ENCODE measurements at regions of chr2 and their contacts with region 1.

Region 1: GRCh38 chr2:230160112-230160660 is 59.6 kb downstream of the SP110 start:
- DNase-seq: peak; percentile 48 to 58
- H3K4me3 ChIP-seq: no peak overlapping the region
- H3K27ac ChIP-seq: no peak overlapping the region
- H3K4me1 ChIP-seq: no peaks in the 10 kb centered on the region
- H3K27me3 ChIP-seq: no peaks in the 10 kb centered on the region
- CTCF ChIP-seq: peak; percentile 84

Region 2: GRCh38 chr2:230053753-230054478 is 106.3 kb before region 1 on chr2:
- CTCF ChIA-PET with region 1: interaction called, 20 read pairs
- POLR2A ChIA-PET with region 1: interaction called, 4 read pairs
- intact Hi-C with region 1: no loop called
- DNase-seq: peak; percentile 54 to 90
- H3K4me3 ChIP-seq: peak overlapping the region; percentile 15; the same call in 1 of the 2 replicates
- H3K27ac ChIP-seq: peak overlapping the region; percentile 84
- H3K4me1 ChIP-seq: peaks cover 31% of the 10 kb centered on the region
- H3K27me3 ChIP-seq: no peaks in the 10 kb centered on the region
- CTCF ChIP-seq: no peak

Region 3: GRCh38 chr2:230085201-230085600 is 75.0 kb before region 1 on chr2:
- CTCF ChIA-PET with region 1: interaction called, 12 read pairs
- POLR2A ChIA-PET with region 1: no interaction called
- intact Hi-C with region 1: no loop called
- DNase-seq: no peak
- H3K4me3 ChIP-seq: no peak overlapping the region
- H3K27ac ChIP-seq: no peak overlapping the region
- H3K4me1 ChIP-seq: no peaks in the 10 kb centered on the region
- H3K27me3 ChIP-seq: no peaks in the 10 kb centered on the region
- CTCF ChIP-seq: no peak

Region 4: DNA sequence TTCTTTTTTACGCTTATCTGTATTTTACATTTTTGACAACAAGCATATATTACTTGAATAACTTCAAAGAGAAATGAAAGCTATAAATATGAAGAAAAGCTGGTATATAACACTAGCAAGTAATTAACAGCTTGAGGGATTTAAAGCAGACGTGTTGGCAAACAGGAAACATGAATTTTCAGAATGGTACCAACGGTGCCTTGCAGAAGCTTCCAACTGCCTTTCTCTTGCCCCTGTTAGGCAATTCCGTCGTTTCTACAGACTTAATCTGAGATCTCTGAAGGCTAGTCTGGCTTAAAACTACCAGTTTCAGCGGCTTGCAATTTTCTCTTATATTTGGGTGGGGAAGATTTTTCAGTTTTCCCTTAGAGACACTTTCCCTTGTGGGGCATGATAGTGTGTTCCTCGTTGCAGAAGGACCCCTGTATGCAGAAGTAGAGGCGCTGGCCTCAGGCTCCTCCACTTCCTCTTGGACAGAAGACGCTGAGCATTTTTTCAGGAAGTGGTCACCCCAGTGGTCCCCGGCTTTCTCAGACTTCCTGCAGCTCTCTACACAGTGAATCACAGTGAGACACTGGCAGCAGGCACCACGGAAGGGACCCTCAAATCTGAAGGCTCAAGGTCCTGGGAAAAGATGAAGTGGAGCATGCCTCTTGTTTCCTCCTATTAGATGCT is 35.3 kb before region 1 on chr2:
- CTCF ChIA-PET with region 1: no interaction called
- POLR2A ChIA-PET with region 1: no interaction called
- intact Hi-C with region 1: no loop called
- DNase-seq: no peak
- H3K4me3 ChIP-seq: no peak overlapping the region
- H3K27ac ChIP-seq: no peak overlapping the region
- H3K4me1 ChIP-seq: no peaks in the 10 kb centered on the region
- H3K27me3 ChIP-seq: no peaks in the 10 kb centered on the region
- CTCF ChIP-seq: no peak

Region 5: DNA sequence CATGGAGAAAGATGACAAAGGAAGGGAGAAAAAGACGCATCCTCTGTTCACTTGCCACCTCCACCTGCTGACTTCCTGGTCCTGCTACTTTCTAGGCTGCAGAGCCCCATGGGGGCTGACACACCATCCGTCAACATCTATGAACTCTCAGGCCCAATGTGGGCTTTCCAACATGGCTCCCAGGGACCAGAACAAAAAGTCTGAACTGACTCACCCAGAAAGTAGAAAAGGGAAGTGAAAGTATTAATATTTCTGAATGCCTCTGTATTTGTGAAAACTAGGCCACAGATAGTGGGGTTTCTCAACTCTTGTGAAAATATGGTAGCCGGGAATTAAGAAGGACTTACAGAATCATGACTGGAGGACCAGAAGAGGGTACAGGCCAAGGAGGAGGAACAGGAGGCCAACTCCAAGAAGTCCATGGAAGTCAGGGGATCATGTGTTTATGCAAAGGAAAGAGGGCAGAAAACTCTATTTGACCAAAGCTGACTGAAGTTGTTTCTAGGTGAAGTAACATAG is 429.4 kb after region 1 on chr2:
- CTCF ChIA-PET with region 1: interaction called, 10 read pairs
- POLR2A ChIA-PET with region 1: no interaction called
- intact Hi-C with region 1: no loop called
- DNase-seq: no peak
- H3K4me3 ChIP-seq: no peak overlapping the region
- H3K27ac ChIP-seq: no peak overlapping the region
- H3K4me1 ChIP-seq: no peaks in the 10 kb centered on the region
- H3K27me3 ChIP-seq: no peaks in the 10 kb centered on the region
- CTCF ChIP-seq: no peak